ENCODE measurements at regions of chr16 and their contacts with region 1.

Region 1: DNA sequence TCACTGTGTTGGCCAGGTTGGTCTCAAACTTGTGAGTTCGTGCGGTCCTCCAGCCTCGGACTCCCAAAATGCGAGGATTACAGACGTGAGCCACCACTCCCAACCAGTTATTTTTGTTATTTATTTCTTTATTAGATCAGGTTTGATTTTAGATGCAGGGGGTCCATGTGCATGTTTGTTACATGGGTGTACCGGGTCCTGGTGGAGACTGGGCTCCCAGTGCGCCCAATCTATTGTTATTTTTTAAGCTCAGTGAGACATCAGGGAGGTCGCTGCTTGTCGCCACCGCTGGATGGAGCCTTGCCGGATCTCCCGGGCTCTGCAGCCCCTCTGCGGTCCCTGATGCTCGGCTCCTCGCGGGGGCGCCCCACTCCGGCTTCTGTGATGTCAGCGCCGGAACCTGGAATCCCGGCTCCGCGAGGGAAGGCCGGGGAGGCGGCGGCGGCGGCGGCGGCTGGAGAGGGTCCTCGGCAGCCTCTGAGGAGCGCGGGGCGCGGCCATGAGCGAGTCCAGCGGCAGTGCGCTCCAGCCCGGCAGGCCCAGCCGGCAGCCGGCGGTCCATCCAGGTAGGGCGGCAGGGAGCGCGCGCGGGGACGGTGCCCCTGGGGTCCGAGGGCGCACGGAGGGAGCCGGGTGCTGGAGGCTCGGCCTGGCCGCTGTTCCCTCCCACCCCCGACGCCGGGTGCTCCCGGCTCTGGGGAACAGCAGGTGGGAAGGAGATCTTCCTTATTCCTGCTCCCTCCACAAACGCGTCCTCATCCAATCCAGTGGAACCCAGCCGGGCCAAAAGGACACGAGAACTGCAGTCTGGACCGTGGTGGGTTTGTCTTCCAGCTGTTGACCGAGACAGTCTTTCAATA is at the start of gene TMC7:
- DNase-seq: peak; percentile 86 to 92
- ATAC-seq: peak; percentile 99
- H3K4me3 ChIP-seq: peak within 1 kb of the TSS; percentile 63
- H3K27ac ChIP-seq: peak within 1 kb of the TSS; percentile 87 to 96
- H3K4me1 ChIP-seq: peaks cover 33% of the 10 kb centered on the region
- CTCF ChIP-seq: peak; percentile 98
- EP300 ChIP-seq: no peak
- POLR2A ChIP-seq: peak; percentile 27; the same call in 1 of the 2 replicates
- RAD21 ChIP-seq: peak; percentile 89 to 99
- polyA plus RNA-seq, gene TMC7: 9.4 and 15.0 TPM in 2 replicates

Region 2: GRCh38 chr16:18841833-18842525 is 141.8 kb before region 1 on chr16:
- CTCF ChIA-PET with region 1: no interaction called
- POLR2A ChIA-PET with region 1: no interaction called
- DNase-seq: no peak
- ATAC-seq: no peak
- H3K4me3 ChIP-seq: no peak overlapping the region
- H3K27ac ChIP-seq: no peak overlapping the region
- H3K4me1 ChIP-seq: no peaks in the 10 kb centered on the region
- CTCF ChIP-seq: no peak
- EP300 ChIP-seq: no peak
- POLR2A ChIP-seq: no peak
- RAD21 ChIP-seq: no peak

Region 3: DNA sequence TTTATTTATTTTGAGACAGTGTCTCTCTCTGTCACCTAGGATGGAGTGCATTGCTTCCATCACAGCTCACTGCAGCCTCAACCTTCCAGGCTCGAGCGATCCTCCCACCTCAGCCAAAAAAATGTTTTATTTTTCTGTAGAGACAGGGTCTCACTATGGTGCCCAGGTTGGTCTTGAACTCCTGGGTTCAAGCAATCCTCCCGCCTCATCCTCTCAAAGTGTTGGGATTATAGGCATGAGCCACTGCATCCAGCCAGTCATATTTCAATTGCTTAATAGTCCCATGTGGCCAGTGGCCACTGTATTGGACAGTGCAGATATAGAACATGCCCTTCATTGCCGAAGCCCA is 15.2 kb after region 1 on chr16:
- CTCF ChIA-PET with region 1: interaction called, 49 read pairs
- POLR2A ChIA-PET with region 1: interaction called, 15 read pairs
- DNase-seq: no peak
- ATAC-seq: peak in 1 of 2 experiments; percentile 9; a peak in 4 of 6 replicates
- H3K4me3 ChIP-seq: peak overlapping the region; percentile 11; the same call in 1 of the 3 replicates
- H3K27ac ChIP-seq: peak overlapping the region; percentile 87 to 89
- H3K4me1 ChIP-seq: peaks cover 68% of the 10 kb centered on the region
- CTCF ChIP-seq: no peak
- EP300 ChIP-seq: no peak
- POLR2A ChIP-seq: no peak
- RAD21 ChIP-seq: no peak

Region 4: GRCh38 chr16:19020689-19021088 is 36.9 kb after region 1 on chr16:
- CTCF ChIA-PET with region 1: interaction called, 95 read pairs
- POLR2A ChIA-PET with region 1: no interaction called
- DNase-seq: no peak
- ATAC-seq: no peak
- H3K4me3 ChIP-seq: no peak overlapping the region
- H3K27ac ChIP-seq: no peak overlapping the region
- H3K4me1 ChIP-seq: no peaks in the 10 kb centered on the region
- CTCF ChIP-seq: no peak
- EP300 ChIP-seq: no peak
- POLR2A ChIP-seq: no peak
- RAD21 ChIP-seq: no peak

Region 5: GRCh38 chr16:19044769-19045168 is 61.0 kb after region 1 on chr16:
- CTCF ChIA-PET with region 1: interaction called, 14 read pairs
- POLR2A ChIA-PET with region 1: no interaction called
- DNase-seq: no peak
- ATAC-seq: no peak
- H3K4me3 ChIP-seq: no peak overlapping the region
- H3K27ac ChIP-seq: no peak overlapping the region
- H3K4me1 ChIP-seq: no peaks in the 10 kb centered on the region
- CTCF ChIP-seq: no peak
- EP300 ChIP-seq: no peak
- POLR2A ChIP-seq: no peak
- RAD21 ChIP-seq: no peak

Measured in A549 (cell line).